ENCODE measurements at regions of chr10 and their contacts with region 1.

Region 1: DNA sequence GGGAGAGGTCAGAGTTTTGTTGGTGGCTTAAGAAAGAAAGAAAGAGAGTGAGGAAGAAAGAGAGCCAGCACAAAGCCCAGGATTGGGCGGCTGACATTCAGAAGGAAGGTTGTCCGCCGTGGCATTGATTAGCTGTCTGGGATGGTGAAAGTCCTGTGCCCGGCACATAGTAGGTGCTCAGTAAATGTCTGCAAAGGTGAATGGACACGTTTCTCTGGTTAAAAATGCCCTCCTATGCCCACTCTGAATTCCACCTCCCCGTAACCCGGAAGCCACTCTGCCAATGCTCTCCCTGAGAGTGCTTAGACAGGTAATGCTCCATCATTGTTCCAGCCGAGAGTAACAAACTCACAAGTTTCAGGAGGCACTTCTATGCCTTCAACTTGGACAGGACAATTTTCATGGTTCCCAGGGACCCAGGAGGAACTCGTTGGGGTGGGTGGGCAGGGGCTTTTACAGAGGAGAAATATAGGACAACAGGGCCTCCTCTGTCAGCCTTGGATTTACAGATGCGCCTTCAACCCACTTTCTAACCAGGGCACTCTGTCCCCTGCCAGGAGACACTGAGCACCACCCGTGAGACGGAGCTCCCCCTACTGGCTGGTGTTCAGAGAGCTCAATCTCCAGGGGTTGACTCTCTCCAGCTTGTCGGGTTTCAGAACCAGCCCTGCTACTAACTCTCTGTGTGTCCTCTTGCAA is 411.5 kb upstream of the ZMIZ1 start:
- DNase-seq: peak; percentile 68 to 74
- ATAC-seq: peak; percentile 78 to 94 (median 90)
- H3K4me3 ChIP-seq: no peak overlapping the region
- H3K27ac ChIP-seq: no peak overlapping the region
- H3K4me1 ChIP-seq: peaks cover 0 to 5% (median 0%) of the 10 kb centered on the region in 9 donors
- H3K27me3 ChIP-seq: peaks cover 0 to 3% (median 0%) of the 10 kb centered on the region in 7 donors
- CTCF ChIP-seq: peak; percentile 49 to 82 (median 71)

Region 2: GRCh38 chr10:78047314-78047891 is 609.9 kb before region 1 on chr10:
- intact Hi-C with region 1: loop called in 6 of 10 experiments (anchors 5 to 10 kb)
- DNase-seq: peak; percentile 85 to 87
- ATAC-seq: peak; percentile 72 to 91 (median 87)
- H3K4me3 ChIP-seq: no peak overlapping the region
- H3K27ac ChIP-seq: no peak overlapping the region
- H3K4me1 ChIP-seq: peaks cover 0 to 19% (median 12%) of the 10 kb centered on the region in 9 donors
- H3K27me3 ChIP-seq: no peaks in the 10 kb centered on the region
- CTCF ChIP-seq: peak; percentile 80 to 93 (median 90)

Region 3: GRCh38 chr10:78053211-78053868 is 604.0 kb before region 1 on chr10:
- intact Hi-C with region 1: loop called in 6 of 10 experiments (anchors 5 to 10 kb)
- DNase-seq: no peak
- ATAC-seq: peak in 4 of 8 donors; percentile 24 to 52 (median 42)
- H3K4me3 ChIP-seq: no peak overlapping the region
- H3K27ac ChIP-seq: no peak overlapping the region
- H3K4me1 ChIP-seq: peaks cover 0 to 10% (median 0%) of the 10 kb centered on the region in 9 donors
- H3K27me3 ChIP-seq: no peaks in the 10 kb centered on the region
- CTCF ChIP-seq: no peak

Region 4: GRCh38 chr10:78203915-78204818 is 453.1 kb before region 1 on chr10:
- intact Hi-C with region 1: loop called in 1 of 10 experiments (anchors 10 kb)
- DNase-seq: peak; percentile 71 to 73
- ATAC-seq: peak; percentile 86 to 97 (median 92)
- H3K4me3 ChIP-seq: no peak overlapping the region
- H3K27ac ChIP-seq: peak overlapping the region in 1 of 10 donors; percentile 44
- H3K4me1 ChIP-seq: peaks cover 0 to 11% (median 5%) of the 10 kb centered on the region in 9 donors
- H3K27me3 ChIP-seq: no peaks in the 10 kb centered on the region
- CTCF ChIP-seq: no peak

Region 5: GRCh38 chr10:78211561-78212051 is 445.7 kb before region 1 on chr10:
- intact Hi-C with region 1: loop called in 4 of 10 experiments (anchors 2 to 10 kb)
- DNase-seq: peak in 1 of 2 donors; percentile 39
- ATAC-seq: peak in 5 of 8 donors; percentile 1 to 40 (median 9)
- H3K4me3 ChIP-seq: no peak overlapping the region
- H3K27ac ChIP-seq: peak overlapping the region in 4 of 10 donors; percentile 1 to 56 (median 12)
- H3K4me1 ChIP-seq: peaks cover 20 to 40% (median 25%) of the 10 kb centered on the region in 9 donors
- H3K27me3 ChIP-seq: no peaks in the 10 kb centered on the region
- CTCF ChIP-seq: peak; percentile 19 to 66 (median 51)

Region 6: DNA sequence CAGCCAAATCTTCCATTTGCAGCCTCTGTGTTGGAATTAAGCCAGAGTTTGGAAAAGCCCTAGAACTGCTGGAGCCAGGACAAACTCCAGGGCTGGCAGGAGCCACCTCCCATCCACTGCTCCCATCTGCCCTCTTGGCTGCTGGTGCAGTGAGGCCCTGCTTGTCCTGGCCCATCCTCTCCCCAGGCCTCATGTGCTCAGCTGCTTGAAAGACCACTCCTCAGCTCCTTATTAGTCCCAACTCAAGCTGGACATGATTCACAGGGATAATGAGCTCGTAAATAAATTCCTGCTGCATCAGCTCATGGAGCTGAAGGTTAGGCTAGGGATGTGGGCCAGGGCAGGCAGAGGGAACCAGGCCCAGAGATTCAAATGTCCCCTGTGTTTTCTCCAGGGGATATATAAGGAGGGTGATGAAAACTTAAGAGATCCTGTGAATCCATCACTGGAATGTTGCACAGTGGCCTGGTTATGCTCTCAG is 340.8 kb before region 1 on chr10:
- intact Hi-C with region 1: loop called in 1 of 10 experiments (anchors 10 kb)
- DNase-seq: peak in 1 of 2 donors; percentile 49
- ATAC-seq: peak in 7 of 8 donors; percentile 42 to 72 (median 67)
- H3K4me3 ChIP-seq: no peak overlapping the region
- H3K27ac ChIP-seq: peak overlapping the region in 6 of 10 donors; percentile 7 to 68 (median 26)
- H3K4me1 ChIP-seq: peaks cover 2 to 25% (median 13%) of the 10 kb centered on the region in 9 donors
- H3K27me3 ChIP-seq: no peaks in the 10 kb centered on the region
- CTCF ChIP-seq: no peak